Activated naive CD4-positive, alpha-beta T cell treated with anti-CD3 and anti-CD28 coated beads for 36 hours (primary cell): ENCODE measurements at regions of chr6 and their contacts with region 1.

Region 1: GRCh38 chr6:79869600-79870084 is 77.7 kb downstream of the ELOVL4 start:
- DNase-seq: peak; percentile 87
- H3K4me3 Mint-ChIP-seq: peak overlapping the region; percentile 41
- H3K27ac Mint-ChIP-seq: no peak overlapping the region
- H3K4me1 Mint-ChIP-seq: peaks cover 7% of the 10 kb centered on the region
- H3K27me3 Mint-ChIP-seq: peaks cover 4% of the 10 kb centered on the region

Region 2: GRCh38 chr6:79536954-79537747 is 332.5 kb before region 1 on chr6 and contains the start of gene LCA5:
- CTCF ChIA-PET with region 1: no interaction called
- intact Hi-C with region 1: loop called (anchors 1 kb)
- DNase-seq: peak; percentile 90
- H3K4me3 Mint-ChIP-seq: no peak within 1 kb of the TSS
- H3K27ac Mint-ChIP-seq: no peak within 1 kb of the TSS
- H3K4me1 Mint-ChIP-seq: no peaks in the 10 kb centered on the region
- H3K27me3 Mint-ChIP-seq: peaks cover 8% of the 10 kb centered on the region
- total RNA-seq, gene LCA5: 0.22 to 0.29 TPM

Region 3: DNA sequence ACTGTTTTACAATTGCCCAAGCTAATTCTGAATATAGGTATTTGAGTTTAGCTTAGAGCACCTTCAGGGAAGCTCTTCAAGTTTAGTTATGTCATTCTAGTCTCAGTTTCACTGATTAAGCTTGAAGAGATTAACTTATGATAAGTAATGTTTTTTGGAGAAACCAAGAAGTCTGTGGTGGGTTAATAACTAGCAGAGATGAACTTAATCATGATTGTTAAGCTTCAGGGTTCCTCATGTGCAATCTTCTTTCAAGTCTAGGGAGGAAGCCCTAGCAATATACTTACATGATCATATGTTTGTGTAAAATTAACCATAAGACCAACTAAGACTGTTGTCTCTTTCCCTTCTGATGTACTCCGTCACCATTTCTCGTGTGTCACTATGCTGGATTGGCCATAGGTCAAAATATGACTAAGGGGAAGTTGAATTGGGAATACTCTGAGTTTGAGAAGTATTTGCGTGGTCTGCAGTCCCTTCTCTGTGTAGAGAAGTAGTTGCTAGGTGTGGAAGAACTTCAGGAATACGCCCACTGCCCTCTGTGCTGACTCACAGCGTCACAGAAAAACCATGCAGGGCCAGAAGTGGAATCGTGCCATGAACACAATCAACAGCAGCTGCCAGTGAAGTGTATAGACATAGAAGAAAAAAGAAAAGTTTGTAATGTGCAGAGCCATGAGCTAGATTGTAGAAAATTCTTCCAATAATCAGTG is 150.2 kb before region 1 on chr6:
- CTCF ChIA-PET with region 1: interaction called, 3 read pairs
- intact Hi-C with region 1: loop called (anchors 5 kb)
- DNase-seq: no peak
- H3K4me3 Mint-ChIP-seq: no peak overlapping the region
- H3K27ac Mint-ChIP-seq: no peak overlapping the region
- H3K4me1 Mint-ChIP-seq: no peaks in the 10 kb centered on the region
- H3K27me3 Mint-ChIP-seq: peaks cover 8% of the 10 kb centered on the region

Region 4: DNA sequence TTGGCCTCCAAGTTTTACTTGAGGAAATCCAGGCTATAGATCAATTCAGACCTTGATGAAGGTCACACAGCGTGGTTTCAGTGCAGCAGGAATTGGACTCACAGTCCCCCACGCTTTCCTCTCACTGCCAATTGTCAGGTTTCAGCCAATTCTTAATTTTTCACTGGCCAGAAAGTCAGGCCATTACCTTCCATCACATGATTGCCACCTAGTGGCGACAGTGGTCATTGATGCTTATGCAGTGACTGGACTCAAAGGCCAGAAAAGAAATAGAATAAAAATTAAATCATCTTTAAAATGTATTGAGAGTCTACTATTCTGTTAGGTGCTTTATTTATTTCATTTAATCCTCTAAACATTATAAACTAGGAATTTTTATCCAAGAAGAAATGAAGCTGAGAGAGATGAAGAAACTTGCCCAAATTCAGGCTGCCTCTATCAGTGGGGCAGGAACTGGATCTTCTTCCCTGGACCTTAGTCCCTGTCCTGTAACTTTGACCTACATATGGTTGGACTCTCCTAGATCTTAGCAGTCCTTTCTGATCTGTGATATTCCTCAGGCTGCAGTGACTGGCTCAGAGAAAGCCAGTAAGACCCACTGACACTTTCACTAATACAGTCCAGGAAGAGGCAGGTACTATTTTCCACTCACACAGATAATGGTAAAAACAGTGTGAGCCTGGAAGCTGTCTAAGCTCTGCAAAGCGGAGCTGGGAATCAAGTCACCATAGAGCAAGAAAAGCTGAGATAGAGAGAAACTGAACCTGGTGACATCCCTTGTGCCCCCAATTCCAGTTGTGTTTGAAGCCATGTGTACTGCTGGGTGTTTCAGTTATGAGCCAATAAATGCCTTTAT is 55.6 kb before region 1 on chr6:
- CTCF ChIA-PET with region 1: interaction called, 6 read pairs
- intact Hi-C with region 1: loop called (anchors 1 kb)
- DNase-seq: peak; percentile 84
- H3K4me3 Mint-ChIP-seq: no peak overlapping the region
- H3K27ac Mint-ChIP-seq: no peak overlapping the region
- H3K4me1 Mint-ChIP-seq: no peaks in the 10 kb centered on the region
- H3K27me3 Mint-ChIP-seq: no peaks in the 10 kb centered on the region

Region 5: DNA sequence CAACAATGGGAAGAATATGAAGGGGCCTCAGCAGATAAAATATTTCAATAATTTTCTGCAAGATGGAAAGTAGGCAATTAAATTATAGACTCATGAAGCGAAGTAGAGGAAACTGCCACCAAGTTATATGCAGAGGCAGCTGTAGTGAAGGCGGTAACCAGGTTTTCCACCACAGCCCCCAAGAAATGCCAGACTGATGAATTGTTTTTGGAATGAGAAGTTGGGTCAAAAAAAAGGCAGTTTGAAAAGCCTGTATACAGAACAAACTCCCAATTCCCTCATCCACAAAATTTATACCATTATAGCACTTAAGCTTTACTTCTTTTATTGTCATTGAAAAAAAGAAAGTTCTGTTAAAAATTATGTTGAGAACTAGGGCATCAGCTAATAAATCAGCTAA is 32.4 kb after region 1 on chr6:
- CTCF ChIA-PET with region 1: no interaction called
- intact Hi-C with region 1: no loop called
- DNase-seq: no peak
- H3K4me3 Mint-ChIP-seq: no peak overlapping the region
- H3K27ac Mint-ChIP-seq: no peak overlapping the region
- H3K4me1 Mint-ChIP-seq: no peaks in the 10 kb centered on the region
- H3K27me3 Mint-ChIP-seq: peaks cover 6% of the 10 kb centered on the region

Region 6: GRCh38 chr6:79981652-79982051 is 112.0 kb after region 1 on chr6:
- CTCF ChIA-PET with region 1: no interaction called
- intact Hi-C with region 1: no loop called
- DNase-seq: no peak
- H3K4me3 Mint-ChIP-seq: no peak overlapping the region
- H3K27ac Mint-ChIP-seq: no peak overlapping the region
- H3K4me1 Mint-ChIP-seq: no peaks in the 10 kb centered on the region
- H3K27me3 Mint-ChIP-seq: no peaks in the 10 kb centered on the region

Region 7: GRCh38 chr6:79993012-79993910 is 123.6 kb after region 1 on chr6:
- CTCF ChIA-PET with region 1: no interaction called
- intact Hi-C with region 1: no loop called
- DNase-seq: no peak
- H3K4me3 Mint-ChIP-seq: no peak overlapping the region
- H3K27ac Mint-ChIP-seq: no peak overlapping the region
- H3K4me1 Mint-ChIP-seq: no peaks in the 10 kb centered on the region
- H3K27me3 Mint-ChIP-seq: no peaks in the 10 kb centered on the region

Region 8: GRCh38 chr6:80004173-80005072 is 134.8 kb after region 1 on chr6 and contains the start of gene TTK:
- CTCF ChIA-PET with region 1: no interaction called
- intact Hi-C with region 1: loop called (anchors 2 kb)
- DNase-seq: peak; percentile 93
- H3K4me3 Mint-ChIP-seq: peak within 1 kb of the TSS; percentile 95
- H3K27ac Mint-ChIP-seq: peak within 1 kb of the TSS; percentile 89
- H3K4me1 Mint-ChIP-seq: peaks cover 16% of the 10 kb centered on the region
- H3K27me3 Mint-ChIP-seq: peaks cover 1% of the 10 kb centered on the region
- total RNA-seq, gene TTK: 45.9 to 51.1 TPM

Region 9: GRCh38 chr6:80454197-80454596 is 584.6 kb after region 1 on chr6:
- CTCF ChIA-PET with region 1: no interaction called
- intact Hi-C with region 1: no loop called
- DNase-seq: no peak
- H3K4me3 Mint-ChIP-seq: no peak overlapping the region
- H3K27ac Mint-ChIP-seq: no peak overlapping the region
- H3K4me1 Mint-ChIP-seq: no peaks in the 10 kb centered on the region
- H3K27me3 Mint-ChIP-seq: no peaks in the 10 kb centered on the region